ENCODE measurements at regions of chr11 and their contacts with region 1.

Region 1: GRCh38 chr11:122045181-122045586 is 70.8 kb downstream of the BLID start:
- DNase-seq: no peak
- H3K4me3 ChIP-seq: no peak overlapping the region
- H3K27ac ChIP-seq: peak overlapping the region; percentile 89 to 98
- H3K4me1 ChIP-seq: peaks cover 0 to 16% of the 10 kb centered on the region in 2 donors
- H3K27me3 ChIP-seq: no peaks in the 10 kb centered on the region
- CTCF ChIP-seq: no peak

Region 2: GRCh38 chr11:121722431-121723245 is 322.5 kb before region 1 on chr11:
- intact Hi-C with region 1: no loop called
- DNase-seq: peak; percentile 77 to 89
- H3K4me3 ChIP-seq: peak overlapping the region; percentile 64 to 79
- H3K27ac ChIP-seq: peak overlapping the region; percentile 85 to 93
- H3K4me1 ChIP-seq: no peaks in the 10 kb centered on the region
- H3K27me3 ChIP-seq: no peaks in the 10 kb centered on the region
- CTCF ChIP-seq: peak in 2 of 3 experiments; percentile 9 to 14

Region 3: DNA sequence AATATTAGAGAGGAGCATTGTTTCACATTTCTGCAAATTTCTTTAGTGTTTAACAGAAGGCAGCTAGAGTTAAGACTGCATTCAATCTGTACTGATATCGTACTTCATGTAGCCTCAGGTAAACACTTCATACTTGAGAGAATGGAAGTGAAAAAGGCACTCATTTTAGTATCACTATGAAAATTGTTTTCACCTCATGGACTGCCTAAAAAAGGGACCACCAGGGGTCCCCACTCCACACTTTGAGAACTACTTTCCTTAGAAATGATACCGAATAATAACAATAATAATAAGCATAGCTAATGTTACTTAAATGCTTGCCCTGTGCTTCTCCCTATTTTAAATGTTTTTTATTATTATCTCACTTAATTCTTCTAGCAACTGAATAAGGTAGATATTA is 24.3 kb before region 1 on chr11:
- intact Hi-C with region 1: no loop called
- DNase-seq: no peak
- H3K4me3 ChIP-seq: no peak overlapping the region
- H3K27ac ChIP-seq: no peak overlapping the region
- H3K4me1 ChIP-seq: peaks cover 0 to 3% of the 10 kb centered on the region in 2 donors
- H3K27me3 ChIP-seq: no peaks in the 10 kb centered on the region
- CTCF ChIP-seq: peak; percentile 32 to 50 (median 40)

Region 4: GRCh38 chr11:122069707-122070360 is 24.6 kb after region 1 on chr11:
- intact Hi-C with region 1: loop called (anchors 2 kb)
- DNase-seq: peak; percentile 35 to 94
- H3K4me3 ChIP-seq: peak overlapping the region in 1 of 2 donors; percentile 4
- H3K27ac ChIP-seq: peak overlapping the region in 1 of 2 donors; percentile 40
- H3K4me1 ChIP-seq: peaks cover 0 to 22% of the 10 kb centered on the region in 2 donors
- H3K27me3 ChIP-seq: no peaks in the 10 kb centered on the region
- CTCF ChIP-seq: no peak

Region 5: GRCh38 chr11:122085264-122085663 is 40.1 kb after region 1 on chr11:
- intact Hi-C with region 1: loop called (anchors 5 kb)
- DNase-seq: no peak
- H3K4me3 ChIP-seq: no peak overlapping the region
- H3K27ac ChIP-seq: peak overlapping the region; percentile 42 to 58
- H3K4me1 ChIP-seq: peaks cover 10 to 19% of the 10 kb centered on the region in 2 donors
- H3K27me3 ChIP-seq: no peaks in the 10 kb centered on the region
- CTCF ChIP-seq: no peak

Region 6: GRCh38 chr11:122843281-122844141 is 798.3 kb after region 1 on chr11:
- intact Hi-C with region 1: no loop called
- DNase-seq: no peak
- H3K4me3 ChIP-seq: no peak overlapping the region
- H3K27ac ChIP-seq: no peak overlapping the region
- H3K4me1 ChIP-seq: no peaks in the 10 kb centered on the region
- H3K27me3 ChIP-seq: no peaks in the 10 kb centered on the region
- CTCF ChIP-seq: no peak

Measured in ascending aorta (tissue), 2 donors.